ENCODE measurements at regions of chr11 and their contacts with region 1.

Region 1: DNA sequence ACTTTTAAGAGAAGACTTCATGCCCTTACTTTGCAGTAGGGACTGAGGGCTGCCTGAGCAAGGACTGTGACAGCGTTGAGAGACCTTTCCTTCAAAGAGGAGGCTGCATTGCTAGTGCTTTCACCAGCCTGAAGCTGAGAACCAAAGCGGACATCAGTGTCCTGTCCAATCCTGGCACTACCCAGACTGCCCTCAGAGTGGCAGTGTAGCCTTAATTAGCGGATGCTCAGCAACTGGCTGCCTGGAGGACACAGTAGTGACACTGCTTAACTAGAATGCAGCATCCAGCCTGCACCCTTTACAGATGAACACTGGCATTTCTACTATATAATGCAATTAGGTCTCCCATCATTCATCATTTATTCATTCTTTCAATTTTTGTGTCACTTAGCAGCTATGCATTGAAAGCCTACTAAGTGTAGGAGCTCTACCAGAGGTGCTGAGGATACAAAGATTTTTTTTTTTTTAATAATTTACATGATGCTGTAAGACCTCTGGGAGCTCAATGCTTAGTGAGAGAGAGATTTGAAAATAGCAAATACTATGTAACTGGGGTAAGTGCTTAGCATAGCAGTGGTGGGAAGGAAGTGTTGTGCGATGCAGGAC is 36.9 kb upstream of the SLC36A4 start:
- DNase-seq: peak; percentile 85

Region 2: GRCh38 chr11:93059117-93059957 is 175.4 kb before region 1 on chr11:
- intact Hi-C with region 1: no loop called
- DNase-seq: no peak

Region 3: GRCh38 chr11:93197380-93198214 is 37.1 kb before region 1 on chr11 and contains the start of gene SLC36A4:
- intact Hi-C with region 1: no loop called
- DNase-seq: peak; percentile 98
- total RNA-seq, gene SLC36A4: 20.6 to 30.4 TPM

Region 4: DNA sequence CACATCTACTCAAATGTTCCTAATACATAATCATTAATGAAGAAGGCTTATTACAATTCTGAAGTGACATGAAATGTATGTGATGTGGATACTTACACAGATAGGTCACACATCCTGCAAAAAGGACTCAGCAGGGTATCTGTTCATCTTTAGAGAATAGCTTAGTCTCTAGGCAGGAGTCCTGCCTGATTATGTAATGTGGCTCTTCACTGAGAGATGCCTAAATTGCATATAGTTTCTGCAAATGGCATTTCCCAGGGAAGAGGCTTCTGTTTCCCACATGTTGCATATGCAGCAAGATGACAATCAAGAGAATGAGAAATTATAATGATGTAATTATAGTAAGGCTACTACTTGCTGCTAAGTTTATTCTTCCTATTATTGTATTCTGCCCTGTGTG is 21.9 kb after region 1 on chr11:
- intact Hi-C with region 1: no loop called
- DNase-seq: no peak

Region 5: GRCh38 chr11:93543292-93543977 is 308.7 kb after region 1 on chr11 and contains the start of gene SMCO4:
- intact Hi-C with region 1: loop called in 1 of 2 experiments (anchors 10 kb)
- DNase-seq: peak; percentile 96
- total RNA-seq, gene SMCO4: 11.6 to 11.7 TPM

Region 6: DNA sequence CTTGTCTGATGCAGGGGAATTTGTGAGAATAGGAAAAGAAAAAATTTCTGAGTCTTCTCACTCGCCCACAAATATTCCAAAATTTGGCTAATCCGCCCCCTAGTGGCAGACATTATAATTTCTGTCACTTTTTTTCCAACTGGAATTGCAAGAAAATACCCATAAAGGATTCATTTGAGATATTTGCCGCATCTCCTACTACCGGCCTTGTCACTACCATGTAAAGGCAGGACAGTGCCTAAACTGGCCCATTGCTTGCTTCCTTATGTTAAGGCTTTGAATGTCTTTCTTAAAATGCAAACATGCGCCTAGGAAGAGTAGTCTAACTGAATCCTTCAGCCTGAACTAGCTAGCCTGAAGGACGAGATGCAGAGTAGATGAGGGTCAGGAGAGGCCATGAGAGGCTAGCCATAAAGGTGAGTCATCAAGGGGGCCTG is 417.5 kb after region 1 on chr11:
- intact Hi-C with region 1: loop called (anchors 5 kb)
- DNase-seq: no peak